Activated T-helper 1 cell treated with anti-CD3 and anti-CD28 coated beads, Interleukin-12 subunit alpha, Interleukin-12 subunit beta, Interleukin-2, Interleukin-4 antibody, amounts not matched to agents 30 ng/mL and 10 ng/mL and 1 ng/mL, durations not matched to agents 14 hours and 24 hours and 36 hours (primary cell): ENCODE measurements at regions of chr16 and their contacts with region 1.

Region 1: DNA sequence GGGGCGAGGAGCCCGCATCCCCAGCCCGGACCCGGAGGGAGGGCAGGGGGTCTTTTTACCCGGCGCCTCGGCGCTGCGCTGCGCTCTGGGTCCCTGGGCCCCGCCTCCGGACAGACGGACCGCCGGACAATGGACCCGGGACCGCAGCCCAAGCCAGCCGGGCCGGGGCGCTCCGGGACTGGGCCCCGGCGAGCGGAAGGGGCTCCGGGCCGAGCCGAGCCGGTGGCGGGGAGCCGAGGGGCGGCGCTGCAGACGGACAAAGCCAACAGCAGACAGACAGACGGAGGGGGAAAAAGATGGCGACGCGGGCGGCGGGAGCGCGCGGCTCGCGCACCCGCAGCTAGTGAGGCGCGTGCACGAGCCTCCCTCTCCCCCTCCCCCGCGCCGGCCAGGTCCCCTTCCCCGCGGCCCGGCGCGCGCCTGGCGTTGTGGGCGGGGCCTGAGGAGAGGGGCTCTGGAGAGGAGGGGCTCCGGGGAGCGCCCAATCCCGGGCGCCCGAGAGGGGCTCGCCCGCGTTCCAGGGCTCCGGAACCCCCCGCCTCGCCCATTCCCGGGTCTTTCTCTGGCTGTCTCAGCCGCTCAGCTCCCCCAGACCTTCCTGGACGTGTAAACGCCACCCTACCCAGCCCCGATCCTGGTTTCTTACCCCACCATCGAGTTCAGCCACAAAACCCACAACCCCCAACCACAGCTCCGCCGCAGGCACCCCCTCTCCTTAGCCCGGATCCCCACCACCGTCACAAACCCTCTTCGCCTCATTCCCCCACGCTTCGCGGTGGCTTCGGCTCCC is at the start of gene ZNF821:
- DNase-seq: peak; percentile 61
- H3K4me3 Mint-ChIP-seq: peak within 1 kb of the TSS; percentile 96
- H3K27ac Mint-ChIP-seq: peak within 1 kb of the TSS; percentile 94
- H3K4me1 Mint-ChIP-seq: peaks cover 54% of the 10 kb centered on the region
- H3K27me3 Mint-ChIP-seq: peaks cover 16% of the 10 kb centered on the region
- total RNA-seq, gene ZNF821: 6.4 and 7.4 TPM in 2 replicates

Region 2: DNA sequence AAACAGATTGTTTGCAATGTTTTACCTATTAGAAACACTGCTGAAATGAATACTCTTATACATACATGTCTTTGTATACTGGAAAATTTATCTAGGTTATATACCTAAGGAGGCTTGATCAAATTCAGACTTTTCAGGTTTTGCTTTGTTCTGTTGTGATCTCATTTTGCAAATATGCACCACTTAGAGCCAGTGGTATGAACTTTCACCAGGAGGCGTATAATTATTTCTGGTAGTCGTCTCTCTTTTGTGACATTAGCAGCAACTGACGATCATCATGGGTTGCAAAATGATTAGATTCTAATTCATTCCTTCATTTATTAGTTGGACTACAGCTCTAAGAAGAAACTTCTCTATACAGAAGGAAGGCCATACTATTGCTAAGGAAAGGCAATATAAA is 102.3 kb before region 1 on chr16:
- intact Hi-C with region 1: no loop called
- DNase-seq: no peak
- H3K4me3 Mint-ChIP-seq: no peak overlapping the region
- H3K27ac Mint-ChIP-seq: no peak overlapping the region
- H3K4me1 Mint-ChIP-seq: no peaks in the 10 kb centered on the region
- H3K27me3 Mint-ChIP-seq: no peaks in the 10 kb centered on the region

Region 3: GRCh38 chr16:71845639-71846430 is 38.2 kb before region 1 on chr16 and contains the start of gene ATXN1L:
- intact Hi-C with region 1: loop called (anchors 1 kb)
- DNase-seq: peak; percentile 94
- H3K4me3 Mint-ChIP-seq: peak within 1 kb of the TSS; percentile 93
- H3K27ac Mint-ChIP-seq: peak within 1 kb of the TSS; percentile 94
- H3K4me1 Mint-ChIP-seq: peaks cover 52% of the 10 kb centered on the region
- H3K27me3 Mint-ChIP-seq: no peaks in the 10 kb centered on the region
- total RNA-seq, gene ATXN1L: 20.1 and 20.6 TPM in 2 replicates

Region 4: GRCh38 chr16:71865173-71865863 is 18.7 kb before region 1 on chr16:
- intact Hi-C with region 1: no loop called
- DNase-seq: no peak
- H3K4me3 Mint-ChIP-seq: no peak overlapping the region
- H3K27ac Mint-ChIP-seq: no peak overlapping the region
- H3K4me1 Mint-ChIP-seq: peaks cover 6% of the 10 kb centered on the region
- H3K27me3 Mint-ChIP-seq: no peaks in the 10 kb centered on the region

Region 5: DNA sequence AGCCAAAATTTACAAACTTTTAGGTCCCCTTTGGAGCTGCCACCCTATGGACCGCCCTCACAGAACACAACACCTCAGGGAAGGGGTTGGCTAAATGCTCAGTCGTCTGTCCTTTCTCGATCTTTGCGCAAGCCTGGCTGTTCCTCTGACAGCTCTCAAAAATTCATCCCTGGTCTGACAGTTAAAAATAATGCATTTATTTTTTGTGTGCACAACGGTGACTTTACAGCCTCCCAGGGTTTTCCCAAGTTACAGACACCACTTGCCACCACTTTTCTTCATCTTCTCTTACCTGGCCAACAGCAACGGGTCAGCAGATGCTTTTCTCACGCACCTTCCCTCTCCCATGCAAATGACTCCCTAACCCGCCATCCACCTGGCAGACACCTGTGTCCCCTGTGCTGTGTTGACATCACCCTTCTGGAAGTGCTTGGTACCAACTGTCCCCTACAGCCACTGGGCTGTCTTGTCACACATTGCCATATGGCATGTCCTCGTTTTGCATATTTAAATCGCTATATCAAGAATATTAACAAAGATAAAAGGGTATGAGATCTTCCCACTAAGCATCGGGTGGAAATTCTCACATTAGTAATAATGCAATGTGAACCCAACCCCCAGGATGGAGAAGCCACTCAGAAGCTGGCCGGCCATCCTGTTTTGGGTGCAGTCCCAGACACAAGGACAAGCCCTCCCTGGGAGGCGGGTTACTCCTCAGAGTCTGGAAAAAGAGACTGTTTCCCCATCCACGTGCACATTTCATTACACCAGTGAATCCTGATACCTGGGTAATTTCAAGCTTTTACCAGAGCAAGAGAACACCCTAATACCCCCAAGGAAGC is 976.9 kb after region 1 on chr16:
- intact Hi-C with region 1: no loop called
- DNase-seq: no peak
- H3K4me3 Mint-ChIP-seq: no peak overlapping the region
- H3K27ac Mint-ChIP-seq: no peak overlapping the region
- H3K4me1 Mint-ChIP-seq: no peaks in the 10 kb centered on the region
- H3K27me3 Mint-ChIP-seq: peaks cover 1% of the 10 kb centered on the region